PC-9 (cell line): ENCODE measurements at regions of chr17 and their contacts with region 1.

Region 1: DNA sequence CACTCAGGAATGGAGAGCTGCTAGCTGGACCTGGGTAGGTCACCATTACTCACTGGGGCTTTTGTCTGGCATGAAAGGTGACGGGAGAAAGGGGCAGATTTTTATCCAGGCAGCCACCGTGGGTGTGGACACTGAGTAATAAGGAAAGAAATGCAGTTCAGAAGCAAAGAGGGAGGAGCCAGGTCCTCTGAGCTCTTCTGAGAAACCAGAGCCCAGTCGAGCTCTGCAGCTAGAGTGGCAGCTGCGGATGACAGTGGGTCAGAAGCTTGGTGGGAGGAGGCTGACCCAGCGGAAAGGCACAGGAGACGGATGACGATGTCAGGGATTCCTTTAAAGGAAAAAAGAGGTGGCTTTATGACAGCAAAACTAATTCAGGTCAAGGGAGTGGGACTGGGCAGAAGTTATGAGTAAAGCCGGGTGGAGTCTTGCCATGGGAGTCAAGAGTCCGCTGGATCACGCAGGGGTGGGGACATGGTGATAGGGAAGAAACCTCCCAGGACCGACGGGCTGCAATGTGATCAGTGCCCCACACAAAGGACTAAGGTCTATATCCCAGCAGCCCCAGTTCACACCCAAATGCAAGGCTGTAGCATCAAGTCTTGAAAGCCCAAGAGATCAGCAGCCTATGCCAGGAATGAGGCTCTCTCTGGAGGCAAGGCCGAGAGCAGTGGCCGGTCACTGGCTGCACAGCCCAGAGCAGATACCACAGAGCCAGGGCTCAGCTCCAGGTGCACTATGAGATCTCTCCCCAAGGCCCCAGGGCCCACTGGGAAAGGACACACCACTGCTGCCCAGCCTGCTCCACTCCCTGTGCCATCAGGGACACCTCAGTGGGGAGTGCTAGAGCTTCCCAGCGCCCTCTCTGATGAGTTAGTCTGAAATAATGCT is 6.3 kb upstream of the MNT start:
- DNase-seq: peak; percentile 95 to 99
- H3K4me3 ChIP-seq: peak overlapping the region; percentile 37; the same call in 1 of the 2 replicates
- H3K27ac ChIP-seq: peak overlapping the region; percentile 98
- H3K4me1 ChIP-seq: peaks cover 54% of the 10 kb centered on the region
- H3K27me3 ChIP-seq: no peaks in the 10 kb centered on the region
- CTCF ChIP-seq: no peak

Region 2: GRCh38 chr17:2041561-2042366 is 365.4 kb before region 1 on chr17 and contains the start of gene OVCA2:
- CTCF ChIA-PET with region 1: no interaction called
- POLR2A ChIA-PET with region 1: no interaction called
- intact Hi-C with region 1: loop called (anchors 5 kb)
- DNase-seq: peak; percentile 82 to 98
- H3K4me3 ChIP-seq: peak within 1 kb of the TSS; percentile 93
- H3K27ac ChIP-seq: peak within 1 kb of the TSS; percentile 73
- H3K4me1 ChIP-seq: peaks cover 35% of the 10 kb centered on the region
- H3K27me3 ChIP-seq: no peaks in the 10 kb centered on the region
- CTCF ChIP-seq: peak; percentile 49
- total RNA-seq, gene OVCA2: 34.4 and 35.4 TPM in 2 replicates

Region 3: GRCh38 chr17:2212385-2212981 is 194.7 kb before region 1 on chr17:
- CTCF ChIA-PET with region 1: no interaction called
- POLR2A ChIA-PET with region 1: no interaction called
- intact Hi-C with region 1: no loop called
- DNase-seq: peak in 1 of 2 experiments; percentile 62
- H3K4me3 ChIP-seq: no peak overlapping the region
- H3K27ac ChIP-seq: no peak overlapping the region
- H3K4me1 ChIP-seq: peaks cover 6% of the 10 kb centered on the region
- H3K27me3 ChIP-seq: no peaks in the 10 kb centered on the region
- CTCF ChIP-seq: no peak

Region 4: DNA sequence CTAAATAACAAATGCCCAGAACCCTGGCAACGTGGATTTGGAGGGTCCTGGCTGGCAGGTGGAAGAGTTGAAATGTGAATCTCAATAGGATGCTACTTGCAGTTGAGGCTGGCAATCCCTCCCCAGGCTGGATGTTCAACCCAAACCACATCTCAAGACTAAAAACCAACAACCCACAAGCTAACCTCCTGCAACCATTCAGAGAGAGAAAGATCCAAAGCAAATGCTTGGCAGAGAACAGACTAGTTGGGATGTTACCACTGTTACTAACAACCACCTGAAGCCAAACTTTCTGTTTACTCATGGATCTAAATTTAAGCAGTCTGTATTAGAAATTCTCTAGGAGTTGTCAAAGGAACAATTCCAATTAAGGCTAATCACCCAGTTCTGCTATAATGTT is 131.4 kb before region 1 on chr17:
- CTCF ChIA-PET with region 1: no interaction called
- POLR2A ChIA-PET with region 1: no interaction called
- intact Hi-C with region 1: no loop called
- DNase-seq: no peak
- H3K4me3 ChIP-seq: no peak overlapping the region
- H3K27ac ChIP-seq: no peak overlapping the region
- H3K4me1 ChIP-seq: no peaks in the 10 kb centered on the region
- H3K27me3 ChIP-seq: no peaks in the 10 kb centered on the region
- CTCF ChIP-seq: no peak

Region 5: DNA sequence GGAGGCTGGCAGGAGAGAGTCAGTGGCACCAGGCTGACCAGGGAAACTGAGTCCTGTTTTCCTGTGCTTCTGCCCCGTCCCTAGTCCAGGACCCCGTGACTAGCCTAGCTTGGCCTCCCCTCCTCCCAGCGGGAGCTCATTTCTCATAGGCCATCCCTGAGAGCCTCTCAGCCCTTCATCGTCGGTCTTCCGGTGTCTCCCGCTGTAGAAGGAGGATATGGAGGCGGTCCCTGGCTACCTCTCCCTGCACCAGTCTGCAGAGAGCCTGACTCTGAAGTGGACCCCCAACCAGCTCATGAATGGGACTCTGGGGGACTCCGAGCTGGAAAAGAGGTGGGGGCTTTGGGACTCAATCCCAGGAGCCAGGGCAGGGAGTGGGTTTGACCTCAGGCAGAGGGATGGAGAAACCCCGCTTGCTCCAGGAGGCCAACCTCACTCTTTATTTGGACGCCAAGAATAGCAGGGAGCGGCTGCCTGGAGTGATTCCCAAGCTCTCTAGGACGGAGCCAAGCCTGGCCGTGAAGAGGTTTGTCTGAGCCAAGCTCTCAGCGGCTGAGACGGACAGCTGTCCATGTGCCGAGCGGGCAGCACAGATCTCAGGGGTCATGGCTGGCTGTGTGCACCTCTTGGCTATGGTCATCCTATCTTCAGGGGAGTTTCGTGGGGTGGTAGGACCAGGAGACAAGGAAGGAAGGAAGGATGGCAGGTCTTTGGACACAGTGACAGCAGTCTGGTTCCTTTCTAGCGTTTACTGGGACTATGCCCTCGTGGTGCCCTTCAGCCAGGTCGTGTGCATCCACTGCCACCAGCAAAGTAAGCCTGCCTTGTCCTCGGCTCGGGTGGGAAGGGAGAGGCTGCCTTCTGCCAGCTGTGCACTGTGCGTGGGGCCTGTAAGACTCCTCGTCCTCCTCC is 43.0 kb before region 1 on chr17:
- CTCF ChIA-PET with region 1: no interaction called
- POLR2A ChIA-PET with region 1: interaction called, 3 read pairs
- intact Hi-C with region 1: loop called (anchors 1 kb)
- DNase-seq: no peak
- H3K4me3 ChIP-seq: no peak overlapping the region
- H3K27ac ChIP-seq: no peak overlapping the region
- H3K4me1 ChIP-seq: peaks cover 26% of the 10 kb centered on the region
- H3K27me3 ChIP-seq: no peaks in the 10 kb centered on the region
- CTCF ChIP-seq: no peak

Region 6: DNA sequence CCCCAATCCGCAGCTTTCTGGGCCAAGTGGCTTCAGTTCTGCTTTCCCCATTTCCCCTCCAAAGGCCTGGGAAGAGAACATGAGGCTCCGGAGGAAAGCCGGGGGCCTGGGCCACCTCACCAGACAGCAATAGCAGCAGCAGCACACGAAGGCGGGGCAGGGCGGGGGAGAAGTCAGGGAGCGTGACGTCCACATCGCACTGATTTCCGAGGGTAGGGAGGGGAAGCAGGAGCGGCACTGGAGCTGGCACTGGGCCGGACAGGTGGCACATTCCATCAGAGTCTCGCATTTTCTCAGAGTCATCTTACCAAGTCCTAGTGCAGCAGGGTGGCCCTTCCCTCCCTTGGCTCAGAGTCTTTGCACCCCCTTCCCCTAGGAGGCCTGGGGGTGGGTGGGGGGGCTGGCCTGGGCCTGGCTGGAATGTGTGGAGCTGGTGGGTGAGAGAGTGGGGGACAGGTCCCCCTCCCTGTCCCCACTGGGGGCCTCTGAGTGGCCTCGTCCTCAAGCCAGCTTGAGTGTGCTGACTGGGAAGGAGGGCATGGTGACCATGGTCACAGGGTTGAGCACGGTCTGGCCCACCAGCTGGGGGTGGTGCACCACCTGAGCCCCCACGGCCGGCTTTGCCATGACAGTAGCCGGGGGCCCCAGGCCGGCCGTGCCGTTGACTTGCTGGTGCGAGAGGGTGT is 20.6 kb before region 1 on chr17:
- CTCF ChIA-PET with region 1: interaction called, 13 read pairs
- POLR2A ChIA-PET with region 1: interaction called, 12 read pairs
- intact Hi-C with region 1: no loop called
- DNase-seq: peak in 1 of 2 experiments; percentile 89
- H3K4me3 ChIP-seq: no peak overlapping the region
- H3K27ac ChIP-seq: no peak overlapping the region
- H3K4me1 ChIP-seq: peaks cover 2% of the 10 kb centered on the region
- H3K27me3 ChIP-seq: no peaks in the 10 kb centered on the region
- CTCF ChIP-seq: no peak

Region 7: DNA sequence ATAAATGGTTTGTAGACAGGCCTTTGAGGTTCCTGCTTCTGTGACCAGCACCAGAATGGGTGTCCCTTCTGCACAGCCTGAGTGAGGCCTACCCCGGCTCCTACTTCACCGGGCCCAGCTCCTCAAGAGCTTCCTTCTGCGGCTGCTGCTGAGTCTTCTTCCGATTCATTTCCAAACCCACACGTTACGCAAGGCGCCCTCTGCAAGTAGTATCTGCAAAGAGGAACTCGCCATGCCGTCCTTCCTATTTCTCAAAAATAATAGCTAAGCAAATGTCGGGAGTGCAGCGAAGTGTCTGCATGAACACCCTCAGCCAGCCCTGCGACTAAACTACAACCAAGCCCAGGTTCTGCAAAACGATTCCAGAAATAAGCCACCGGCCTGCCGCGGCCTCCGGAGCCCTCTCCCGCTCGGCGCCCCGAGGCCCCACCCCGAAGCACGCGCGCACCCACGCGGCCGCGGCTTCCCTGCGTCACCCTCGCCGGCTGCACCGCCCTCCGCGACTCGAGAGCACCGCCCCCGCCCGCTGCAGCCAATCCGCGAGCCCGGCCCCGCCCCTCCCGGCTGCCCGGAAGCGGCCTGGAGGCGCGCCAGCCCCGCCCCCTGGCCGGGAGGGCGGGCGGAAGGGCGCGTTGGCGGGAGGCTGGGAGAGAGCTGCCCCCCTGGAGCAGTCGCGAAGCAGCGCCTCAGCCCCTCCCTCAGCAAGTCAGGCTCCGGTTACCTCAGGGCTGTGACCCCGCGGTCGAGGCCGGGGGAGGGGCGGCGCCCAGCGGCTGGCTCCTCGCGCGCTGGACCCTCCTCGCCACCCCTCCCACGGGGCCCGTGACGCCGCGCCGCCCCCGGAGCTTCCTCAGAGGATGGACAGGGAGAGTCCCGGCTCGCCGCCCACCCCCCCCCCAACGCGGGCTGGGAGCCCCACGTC is 14.6 kb before region 1 on chr17:
- CTCF ChIA-PET with region 1: no interaction called
- POLR2A ChIA-PET with region 1: interaction called, 31 read pairs
- intact Hi-C with region 1: loop called (anchors 2 kb)
- DNase-seq: peak; percentile 84 to 99
- H3K4me3 ChIP-seq: peak overlapping the region; percentile 70
- H3K27ac ChIP-seq: peak overlapping the region; percentile 84
- H3K4me1 ChIP-seq: peaks cover 32% of the 10 kb centered on the region
- H3K27me3 ChIP-seq: no peaks in the 10 kb centered on the region
- CTCF ChIP-seq: no peak

Region 8: DNA sequence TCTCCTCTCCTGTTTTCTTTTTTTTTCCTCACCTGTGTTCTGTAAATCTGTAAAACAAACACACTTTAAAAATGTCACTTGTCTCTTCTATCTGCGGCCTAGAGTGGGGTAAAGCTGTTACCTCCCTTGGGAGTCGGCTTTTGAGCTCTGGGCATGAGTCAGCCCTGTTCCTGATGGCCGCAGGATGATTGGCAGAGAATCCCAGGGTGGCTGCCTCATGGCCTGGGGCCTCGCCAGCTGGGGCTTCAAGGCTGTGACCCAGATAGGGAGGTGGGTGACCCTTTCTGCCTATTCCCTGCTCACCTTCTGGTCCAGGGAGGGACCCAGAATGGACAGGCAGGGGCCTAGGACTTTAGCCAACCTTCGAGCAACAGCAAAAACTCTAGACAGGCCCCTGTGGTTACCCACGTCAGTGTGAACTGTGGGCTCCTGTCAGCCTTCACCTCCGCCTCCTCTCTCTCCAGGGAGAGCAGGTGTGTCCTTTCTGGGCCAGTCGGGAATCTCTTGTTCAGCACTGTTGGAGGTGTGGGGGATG is 476.5 kb after region 1 on chr17:
- CTCF ChIA-PET with region 1: interaction called, 3 read pairs
- POLR2A ChIA-PET with region 1: interaction called, 11 read pairs
- intact Hi-C with region 1: no loop called
- DNase-seq: peak; percentile 42 to 72
- H3K4me3 ChIP-seq: no peak overlapping the region
- H3K27ac ChIP-seq: no peak overlapping the region
- H3K4me1 ChIP-seq: peaks cover 11% of the 10 kb centered on the region
- H3K27me3 ChIP-seq: no peaks in the 10 kb centered on the region
- CTCF ChIP-seq: no peak

Region 9: GRCh38 chr17:3668279-3669085 is 1261.3 kb after region 1 on chr17 and contains the starts of genes EMC6 and TAX1BP3:
- CTCF ChIA-PET with region 1: no interaction called
- POLR2A ChIA-PET with region 1: interaction called, 5 read pairs
- intact Hi-C with region 1: loop called (anchors 5 kb)
- DNase-seq: peak; percentile 92 to 100
- H3K4me3 ChIP-seq: peak within 1 kb of the TSS; percentile 95
- H3K27ac ChIP-seq: peak within 1 kb of the TSS; percentile 88
- H3K4me1 ChIP-seq: peaks cover 25% of the 10 kb centered on the region
- H3K27me3 ChIP-seq: no peaks in the 10 kb centered on the region
- CTCF ChIP-seq: no peak; the same call in 1 of the 2 replicates
- total RNA-seq, gene EMC6: 89.6 and 89.9 TPM in 2 replicates
- total RNA-seq, gene TAX1BP3: 147 and 168 TPM in 2 replicates